GM23248 (cell line): ENCODE measurements at regions of chr11 and their contacts with region 1.

Region 1: GRCh38 chr11:69654569-69655327 is 13.8 kb downstream of the CCND1 start:
- DNase-seq: peak; percentile 70
- H3K4me3 ChIP-seq: no peak overlapping the region
- H3K27ac ChIP-seq: peak overlapping the region; percentile 9
- H3K4me1 ChIP-seq: no peaks in the 10 kb centered on the region
- H3K27me3 ChIP-seq: no peaks in the 10 kb centered on the region

Region 2: DNA sequence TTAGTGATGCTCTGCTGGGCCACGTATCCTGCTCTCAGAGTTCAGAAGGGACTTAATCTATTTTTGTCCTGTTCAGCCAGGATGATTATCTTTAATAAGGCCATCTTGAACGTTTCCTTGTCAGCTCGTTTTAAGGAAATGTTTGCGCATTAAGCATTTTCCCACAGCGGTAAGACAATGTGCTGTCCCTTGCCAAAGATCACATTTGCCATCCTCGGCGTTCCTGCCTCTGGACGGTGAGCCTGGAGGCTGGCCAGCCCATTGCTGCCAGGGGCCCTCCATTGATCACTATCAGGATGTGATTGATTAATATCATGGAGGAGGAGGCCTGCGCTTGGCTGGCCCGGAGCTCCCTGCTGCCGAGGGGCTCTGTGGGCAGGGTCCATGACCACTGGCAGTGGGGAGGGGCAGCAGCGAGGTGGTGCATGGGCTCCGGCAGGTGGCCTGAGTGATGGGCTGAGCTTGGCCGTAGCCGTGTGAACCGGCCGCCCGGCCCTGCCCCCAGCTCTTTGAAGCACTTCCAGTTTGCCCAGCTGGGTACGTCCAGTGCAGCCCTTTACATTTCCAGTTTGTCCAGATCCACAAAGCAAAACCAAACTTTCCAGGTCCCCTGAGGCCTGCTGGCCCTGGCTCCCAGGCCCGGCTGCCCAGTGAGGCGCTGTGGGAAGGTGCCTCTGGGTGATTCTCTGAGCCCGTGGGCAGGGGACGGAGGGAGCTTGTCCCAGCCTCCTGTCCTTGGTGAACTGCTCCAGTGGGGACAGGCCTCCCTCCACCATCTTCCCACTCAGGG is 548.5 kb before region 1 on chr11:
- in situ Hi-C with region 1: loop called (anchors 5 kb)
- DNase-seq: no peak
- H3K4me3 ChIP-seq: no peak overlapping the region
- H3K27ac ChIP-seq: no peak overlapping the region
- H3K4me1 ChIP-seq: no peaks in the 10 kb centered on the region
- H3K27me3 ChIP-seq: peaks cover 9% of the 10 kb centered on the region; the same call in 1 of the 2 replicates

Region 3: GRCh38 chr11:69925366-69926196 is 270.8 kb after region 1 on chr11:
- in situ Hi-C with region 1: no loop called
- DNase-seq: no peak
- H3K4me3 ChIP-seq: no peak overlapping the region
- H3K27ac ChIP-seq: no peak overlapping the region
- H3K4me1 ChIP-seq: no peaks in the 10 kb centered on the region
- H3K27me3 ChIP-seq: peaks cover 61% of the 10 kb centered on the region